ENCODE measurements at regions of chr6 and their contacts with region 1.

Region 1: GRCh38 chr6:10163200-10163962 is 251.5 kb downstream of the TFAP2A start:
- DNase-seq: peak; percentile 89
- H3K4me3 Mint-ChIP-seq: peak overlapping the region; percentile 59
- H3K27ac Mint-ChIP-seq: peak overlapping the region; percentile 76
- H3K4me1 Mint-ChIP-seq: peaks cover 18% of the 10 kb centered on the region
- H3K27me3 Mint-ChIP-seq: no peaks in the 10 kb centered on the region
- CTCF ChIP-seq: no peak

Region 2: GRCh38 chr6:9628819-9629218 is 534.6 kb before region 1 on chr6:
- CTCF ChIA-PET with region 1: no interaction called
- POLR2A ChIA-PET with region 1: no interaction called
- intact Hi-C with region 1: no loop called
- DNase-seq: peak; percentile 62
- H3K4me3 Mint-ChIP-seq: no peak overlapping the region
- H3K27ac Mint-ChIP-seq: peak overlapping the region; percentile 68
- H3K4me1 Mint-ChIP-seq: peaks cover 8% of the 10 kb centered on the region
- H3K27me3 Mint-ChIP-seq: no peaks in the 10 kb centered on the region
- CTCF ChIP-seq: no peak

Region 3: DNA sequence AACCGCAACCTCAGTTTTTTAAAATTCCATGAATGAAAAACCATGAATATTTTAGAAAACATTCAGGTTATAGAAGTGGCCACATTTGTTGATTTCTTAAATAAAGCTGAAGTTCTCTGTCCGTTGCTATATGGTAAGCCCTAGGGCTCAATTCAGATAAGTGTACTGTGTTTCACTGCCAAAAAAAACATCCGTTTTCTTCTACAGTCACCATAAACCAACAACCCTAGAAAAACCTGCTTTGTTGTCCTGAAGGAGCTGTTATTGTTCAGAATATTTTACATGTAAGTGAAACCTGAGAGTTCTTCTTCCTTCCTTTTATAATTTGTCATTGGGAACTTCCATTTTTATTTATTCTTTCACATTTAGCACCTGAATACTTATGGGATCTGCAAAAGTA is 22.6 kb before region 1 on chr6:
- CTCF ChIA-PET with region 1: no interaction called
- POLR2A ChIA-PET with region 1: interaction called, 22 read pairs
- intact Hi-C with region 1: no loop called
- DNase-seq: peak; percentile 68
- H3K4me3 Mint-ChIP-seq: peak overlapping the region; percentile 12
- H3K27ac Mint-ChIP-seq: peak overlapping the region; percentile 74
- H3K4me1 Mint-ChIP-seq: peaks cover 44% of the 10 kb centered on the region
- H3K27me3 Mint-ChIP-seq: no peaks in the 10 kb centered on the region
- CTCF ChIP-seq: no peak

Region 4: DNA sequence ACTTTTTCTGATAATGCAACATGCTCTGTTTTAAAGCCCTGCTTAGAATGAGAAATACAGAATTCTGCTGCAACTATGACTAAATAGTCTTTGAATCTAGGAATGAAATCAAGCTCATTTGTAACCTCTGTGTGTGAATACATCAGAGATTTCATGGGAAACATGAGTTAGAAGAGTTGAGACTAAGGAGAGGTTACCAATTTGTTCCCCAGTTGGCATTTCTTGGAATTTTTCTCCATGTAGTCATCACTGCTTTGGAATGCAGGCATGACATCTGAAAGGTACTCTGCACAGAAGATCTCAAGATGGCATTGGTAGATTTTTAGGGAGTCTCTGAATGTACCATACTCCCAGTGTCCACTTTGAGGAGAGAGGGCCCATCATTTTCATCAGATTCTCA is 14.3 kb after region 1 on chr6:
- CTCF ChIA-PET with region 1: interaction called, 7 read pairs
- POLR2A ChIA-PET with region 1: interaction called, 52 read pairs
- intact Hi-C with region 1: no loop called
- DNase-seq: peak; percentile 33
- H3K4me3 Mint-ChIP-seq: no peak overlapping the region
- H3K27ac Mint-ChIP-seq: peak overlapping the region; percentile 28
- H3K4me1 Mint-ChIP-seq: peaks cover 30% of the 10 kb centered on the region
- H3K27me3 Mint-ChIP-seq: no peaks in the 10 kb centered on the region
- CTCF ChIP-seq: no peak

Region 5: DNA sequence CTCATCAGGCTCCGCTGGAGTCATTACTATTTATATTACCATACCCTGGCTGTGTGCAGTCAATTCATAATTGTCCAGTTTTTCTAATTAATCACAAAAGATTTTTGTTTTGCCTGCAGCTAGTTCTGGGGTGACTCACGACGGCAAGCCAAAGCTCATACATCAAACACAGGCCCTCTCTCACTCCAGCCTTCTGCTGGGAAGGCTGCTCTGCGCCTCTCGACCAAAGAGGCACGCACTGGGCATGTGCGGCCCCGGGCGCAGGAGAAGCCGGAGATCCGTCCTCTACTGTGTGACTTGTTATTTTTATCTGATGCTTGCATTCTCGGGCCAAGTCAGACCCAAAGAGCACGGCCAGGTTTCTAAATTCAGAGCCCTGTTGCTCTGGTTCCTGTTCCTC is 152.9 kb after region 1 on chr6:
- CTCF ChIA-PET with region 1: interaction called, 3 read pairs
- POLR2A ChIA-PET with region 1: interaction called, 15 read pairs
- intact Hi-C with region 1: no loop called
- DNase-seq: peak; percentile 88
- H3K4me3 Mint-ChIP-seq: peak overlapping the region; percentile 28
- H3K27ac Mint-ChIP-seq: peak overlapping the region; percentile 86
- H3K4me1 Mint-ChIP-seq: peaks cover 14% of the 10 kb centered on the region
- H3K27me3 Mint-ChIP-seq: no peaks in the 10 kb centered on the region
- CTCF ChIP-seq: no peak